ENCODE measurements at regions of chr3 and their contacts with region 1.

Region 1: GRCh38 chr3:139935016-139935865 is at the start of gene CLSTN2:
- DNase-seq: peak; percentile 63 to 78 (median 68)
- ATAC-seq: peak; percentile 77
- H3K4me3 ChIP-seq: peak within 1 kb of the TSS; percentile 12 to 22
- H3K27ac ChIP-seq: no peak within 1 kb of the TSS
- H3K4me1 ChIP-seq: peaks cover 28% of the 10 kb centered on the region
- H3K27me3 ChIP-seq: peaks cover 0 to 10% of the 10 kb centered on the region in 2 donors
- CTCF ChIP-seq: peak in 2 of 7 experiments; percentile 22 to 30
- POLR2A ChIP-seq: peak in 1 of 3 donors; percentile 10
- total RNA-seq, gene CLSTN2: 14.5 to 14.8 TPM

Region 2: GRCh38 chr3:139718415-139718814 is 216.8 kb before region 1 on chr3:
- intact Hi-C with region 1: loop called (anchors 10 kb)
- DNase-seq: peak; percentile 59 to 71 (median 62)
- ATAC-seq: peak; percentile 52
- H3K4me3 ChIP-seq: no peak overlapping the region
- H3K27ac ChIP-seq: no peak overlapping the region
- H3K4me1 ChIP-seq: no peaks in the 10 kb centered on the region
- H3K27me3 ChIP-seq: no peaks in the 10 kb centered on the region
- CTCF ChIP-seq: peak; percentile 38 to 74 (median 52)
- POLR2A ChIP-seq: no peak

Region 3: DNA sequence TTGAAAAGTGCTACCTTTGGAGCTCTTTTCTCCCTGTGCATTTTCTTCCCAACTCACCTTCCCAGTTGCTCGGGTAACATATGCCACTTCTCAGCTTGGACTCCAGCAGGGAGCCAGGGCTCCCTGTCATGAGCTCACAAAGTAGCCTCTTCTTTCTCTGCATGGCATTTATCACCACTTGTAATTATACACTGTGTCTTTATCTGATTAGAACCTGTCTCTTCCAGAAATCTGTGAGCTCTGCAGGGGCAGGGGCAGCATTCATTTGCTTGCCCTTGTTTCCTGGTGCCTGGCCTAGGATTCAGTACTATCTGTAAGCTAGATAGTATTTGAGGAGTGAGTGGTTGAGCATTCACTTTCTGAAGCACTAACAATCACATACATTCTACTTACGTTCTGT is 100.6 kb after region 1 on chr3:
- intact Hi-C with region 1: no loop called
- DNase-seq: no peak
- ATAC-seq: no peak
- H3K4me3 ChIP-seq: no peak overlapping the region
- H3K27ac ChIP-seq: no peak overlapping the region
- H3K4me1 ChIP-seq: no peaks in the 10 kb centered on the region
- H3K27me3 ChIP-seq: no peaks in the 10 kb centered on the region
- CTCF ChIP-seq: no peak
- POLR2A ChIP-seq: no peak

Region 4: GRCh38 chr3:140736863-140737460 is 801.7 kb after region 1 on chr3:
- intact Hi-C with region 1: loop called (anchors 10 kb)
- DNase-seq: peak; percentile 36 to 57 (median 54)
- ATAC-seq: peak; percentile 53
- H3K4me3 ChIP-seq: no peak overlapping the region
- H3K27ac ChIP-seq: no peak overlapping the region
- H3K4me1 ChIP-seq: no peaks in the 10 kb centered on the region
- H3K27me3 ChIP-seq: no peaks in the 10 kb centered on the region
- CTCF ChIP-seq: peak in 6 of 7 experiments; percentile 22 to 66 (median 52)
- POLR2A ChIP-seq: no peak

Measured in body of pancreas (tissue), 4 donors.